ENCODE measurements at regions of chr11 and their contacts with region 1.

Region 1: DNA sequence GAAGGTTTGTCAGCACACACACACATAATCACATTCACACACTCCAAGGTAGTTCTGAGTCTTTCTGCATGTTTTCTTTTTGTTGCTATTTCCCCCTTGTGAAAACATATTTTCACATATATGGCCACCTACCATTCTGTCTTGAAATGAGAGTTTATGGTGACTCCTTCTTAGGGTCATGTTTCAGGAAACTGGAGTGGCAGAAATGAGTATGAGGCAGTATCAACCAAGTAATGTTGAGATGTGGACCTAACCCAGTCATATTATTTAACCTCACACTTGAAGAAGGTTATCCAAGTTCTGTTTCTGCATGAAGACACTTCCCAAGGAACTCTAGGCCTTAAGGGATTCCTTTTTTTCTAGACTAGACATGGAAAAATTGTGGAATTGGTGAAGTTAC is 481.4 kb downstream of the ETS1 start:
- DNase-seq: no peak
- H3K4me3 Mint-ChIP-seq: no peak overlapping the region
- H3K27ac Mint-ChIP-seq: no peak overlapping the region
- H3K4me1 Mint-ChIP-seq: peaks cover 33% of the 10 kb centered on the region
- H3K27me3 Mint-ChIP-seq: peaks cover 3% of the 10 kb centered on the region

Region 2: GRCh38 chr11:127943763-127944162 is 162.2 kb before region 1 on chr11:
- CTCF ChIA-PET with region 1: no interaction called
- POLR2A ChIA-PET with region 1: no interaction called
- intact Hi-C with region 1: loop called (anchors 10 kb)
- DNase-seq: peak; percentile 43
- H3K4me3 Mint-ChIP-seq: no peak overlapping the region
- H3K27ac Mint-ChIP-seq: no peak overlapping the region
- H3K4me1 Mint-ChIP-seq: peaks cover 13% of the 10 kb centered on the region
- H3K27me3 Mint-ChIP-seq: peaks cover 19% of the 10 kb centered on the region

Region 3: DNA sequence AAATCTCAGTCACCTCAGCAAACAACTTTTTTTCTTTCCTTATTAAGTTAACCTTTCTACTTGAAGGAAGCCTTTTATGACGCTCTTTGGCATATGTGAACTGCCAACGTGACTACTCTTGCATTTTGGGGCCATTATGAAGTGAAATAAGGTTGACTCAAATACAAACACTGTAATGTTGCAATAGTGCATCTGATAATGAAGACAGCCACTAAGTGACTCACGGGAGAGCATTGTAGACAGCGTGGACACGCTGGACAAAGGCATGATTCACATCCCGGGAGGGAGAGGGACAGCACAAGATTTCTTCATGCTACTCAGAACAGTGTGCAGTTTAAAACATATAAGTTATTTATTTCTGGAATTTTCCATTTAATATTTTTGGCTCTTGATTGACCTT is 79.4 kb before region 1 on chr11:
- CTCF ChIA-PET with region 1: no interaction called
- POLR2A ChIA-PET with region 1: no interaction called
- intact Hi-C with region 1: loop called (anchors 2 kb)
- DNase-seq: no peak
- H3K4me3 Mint-ChIP-seq: no peak overlapping the region
- H3K27ac Mint-ChIP-seq: no peak overlapping the region
- H3K4me1 Mint-ChIP-seq: peaks cover 9% of the 10 kb centered on the region
- H3K27me3 Mint-ChIP-seq: peaks cover 3% of the 10 kb centered on the region

Region 4: GRCh38 chr11:128052912-128053641 is 52.9 kb before region 1 on chr11:
- CTCF ChIA-PET with region 1: interaction called, 4 read pairs
- POLR2A ChIA-PET with region 1: interaction called, 3 read pairs
- intact Hi-C with region 1: loop called (anchors 5 kb)
- DNase-seq: no peak
- H3K4me3 Mint-ChIP-seq: peak overlapping the region; percentile 70
- H3K27ac Mint-ChIP-seq: peak overlapping the region; percentile 94
- H3K4me1 Mint-ChIP-seq: peaks cover 67% of the 10 kb centered on the region
- H3K27me3 Mint-ChIP-seq: no peaks in the 10 kb centered on the region

Region 5: GRCh38 chr11:128146926-128147605 is 41.1 kb after region 1 on chr11:
- CTCF ChIA-PET with region 1: no interaction called
- POLR2A ChIA-PET with region 1: no interaction called
- intact Hi-C with region 1: no loop called
- DNase-seq: no peak
- H3K4me3 Mint-ChIP-seq: no peak overlapping the region
- H3K27ac Mint-ChIP-seq: no peak overlapping the region
- H3K4me1 Mint-ChIP-seq: no peaks in the 10 kb centered on the region
- H3K27me3 Mint-ChIP-seq: no peaks in the 10 kb centered on the region

Region 6: DNA sequence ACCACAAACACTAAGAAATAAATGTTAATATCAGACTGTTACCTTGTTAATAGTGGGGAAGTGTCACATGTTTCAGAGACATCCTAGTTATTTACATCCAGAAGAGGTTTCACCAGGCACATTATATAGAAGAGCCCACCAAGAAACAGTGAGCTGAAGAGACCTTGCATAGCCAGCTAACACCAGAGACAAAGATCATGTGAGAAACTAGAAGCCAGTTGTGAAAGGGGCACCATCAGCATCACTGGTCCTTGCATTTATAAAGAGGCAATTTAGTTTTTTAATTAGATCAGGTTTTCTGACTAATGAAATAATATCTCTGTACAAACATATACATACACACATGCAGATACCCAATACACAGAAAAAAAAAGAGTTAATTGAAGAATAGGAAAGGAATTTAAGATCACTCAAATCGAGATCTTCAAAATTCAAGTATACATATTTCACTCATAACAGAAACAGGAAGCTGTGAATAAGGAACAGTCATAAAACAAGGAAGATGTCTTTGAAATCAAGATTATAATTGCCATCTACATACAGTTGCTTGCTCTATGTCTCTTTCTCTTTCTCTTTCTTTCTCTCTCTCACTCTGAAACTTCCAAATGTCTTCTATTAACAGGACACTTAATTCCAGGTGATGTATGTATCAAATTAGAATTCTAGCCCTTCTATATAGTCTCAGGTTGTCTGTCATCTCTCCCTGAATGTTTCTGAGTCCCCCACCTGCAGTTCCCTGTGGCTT is 132.7 kb after region 1 on chr11:
- CTCF ChIA-PET with region 1: no interaction called
- POLR2A ChIA-PET with region 1: no interaction called
- intact Hi-C with region 1: loop called (anchors 10 kb)
- DNase-seq: no peak
- H3K4me3 Mint-ChIP-seq: peak overlapping the region; percentile 45
- H3K27ac Mint-ChIP-seq: peak overlapping the region; percentile 75
- H3K4me1 Mint-ChIP-seq: peaks cover 27% of the 10 kb centered on the region
- H3K27me3 Mint-ChIP-seq: no peaks in the 10 kb centered on the region

Measured in activated CD4-positive, alpha-beta memory T cell treated with anti-CD3 and anti-CD28 coated beads for 36 hours (primary cell).